ENCODE measurements at regions of chr22 and their contacts with region 1.

Region 1: DNA sequence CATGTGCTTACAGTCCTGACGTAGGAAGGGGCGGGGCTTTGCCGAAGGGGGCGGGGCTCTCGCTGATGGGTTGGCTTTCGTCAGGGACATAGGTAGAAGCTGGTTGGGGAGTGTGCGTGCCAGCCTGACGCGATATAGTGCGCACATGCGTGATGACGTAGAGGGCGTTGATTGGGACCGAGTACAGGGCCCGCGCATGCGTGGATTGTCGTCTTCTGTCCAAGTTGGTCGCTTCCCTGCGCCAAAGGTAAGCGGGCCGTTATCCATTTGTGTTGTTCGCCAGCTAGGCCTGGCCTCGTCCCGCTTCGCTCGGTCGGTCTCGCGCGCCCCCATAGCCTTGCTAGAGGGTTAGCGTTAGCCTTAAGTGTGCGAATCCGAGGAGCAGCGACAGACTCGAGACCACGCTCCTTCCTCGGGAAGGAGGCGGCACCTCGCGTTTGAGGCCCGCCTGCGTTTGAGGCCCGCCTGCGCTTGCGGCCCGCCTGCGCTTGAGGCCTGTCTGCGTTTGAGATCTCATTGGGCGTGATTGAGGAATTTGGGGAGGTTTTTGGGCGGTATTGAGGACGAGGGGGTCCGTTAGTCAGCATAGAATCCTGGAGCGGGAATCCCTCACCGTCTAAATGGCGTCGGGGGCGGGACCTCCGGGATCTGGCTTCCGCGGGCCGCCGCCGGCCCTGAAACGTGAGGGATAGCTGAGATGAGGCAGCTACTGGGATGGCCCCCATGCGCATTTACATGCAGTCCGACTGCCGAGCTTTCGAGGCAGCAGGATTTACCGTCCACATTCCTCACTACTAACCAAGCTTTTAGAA is at the start of gene XRCC6:
- DNase-seq: peak; percentile 99 to 100 (median 100)
- ATAC-seq: peak; percentile 88
- H3K4me3 ChIP-seq: peak within 1 kb of the TSS; percentile 65
- H3K4me3 Mint-ChIP-seq: peak within 1 kb of the TSS; percentile 95
- H3K27ac ChIP-seq: peak within 1 kb of the TSS; percentile 95 to 96
- H3K27ac Mint-ChIP-seq: peak within 1 kb of the TSS; percentile 98
- H3K4me1 ChIP-seq: peaks cover 43% of the 10 kb centered on the region
- H3K4me1 Mint-ChIP-seq: peaks cover 49% of the 10 kb centered on the region
- H3K27me3 ChIP-seq: no peaks in the 10 kb centered on the region
- H3K27me3 Mint-ChIP-seq: no peaks in the 10 kb centered on the region
- CTCF ChIP-seq: no peak
- total RNA-seq, gene XRCC6: 162 TPM

Region 2: DNA sequence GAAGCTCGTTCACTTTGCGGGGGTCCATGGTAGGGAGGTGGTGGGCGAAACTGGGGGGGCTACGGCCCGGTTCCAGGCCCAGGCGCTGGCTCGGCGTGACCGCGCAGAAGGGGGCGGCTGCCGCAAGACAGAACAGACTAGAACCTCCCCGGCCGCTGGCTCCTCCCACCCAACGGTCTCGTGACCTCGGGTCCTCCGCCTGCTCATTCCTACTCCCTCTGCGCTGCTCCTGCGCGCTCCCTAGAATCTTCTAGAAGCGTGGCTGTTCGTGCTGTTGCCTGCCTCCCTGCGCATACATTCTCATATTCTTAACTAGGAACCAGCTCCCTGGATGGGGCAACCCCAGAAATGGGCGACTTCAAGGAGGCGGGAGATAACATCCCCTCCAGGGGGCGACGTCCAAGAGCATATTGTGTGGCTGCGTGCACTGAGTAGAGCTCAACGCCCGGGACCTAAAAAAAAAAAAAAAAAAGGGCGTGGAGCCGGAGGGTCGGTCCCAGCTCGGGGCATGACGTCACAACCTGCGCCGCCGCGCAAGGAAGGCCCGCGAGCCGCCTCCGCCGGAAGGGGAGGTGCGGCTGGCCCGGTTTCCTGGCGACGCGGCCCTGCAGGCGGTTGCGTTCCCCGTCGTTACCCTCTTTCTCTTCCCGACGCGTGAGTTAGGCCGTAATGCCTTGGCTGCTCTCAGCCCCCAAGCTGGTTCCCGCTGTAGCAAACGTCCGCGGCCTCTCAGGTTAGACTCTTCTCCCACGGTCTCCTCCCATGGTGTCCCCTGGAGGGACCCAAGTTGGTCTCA is 764.6 kb before region 1 on chr22 and contains the starts of genes ST13 and XPNPEP3:
- CTCF ChIA-PET with region 1: no interaction called
- POLR2A ChIA-PET with region 1: no interaction called
- intact Hi-C with region 1: loop called in 1 of 2 experiments (anchors 10 kb)
- DNase-seq: peak; percentile 94 to 99 (median 96)
- ATAC-seq: peak; percentile 86
- H3K4me3 ChIP-seq: peak within 1 kb of the TSS; percentile 96
- H3K4me3 Mint-ChIP-seq: peak within 1 kb of the TSS; percentile 100
- H3K27ac ChIP-seq: peak within 1 kb of the TSS; percentile 95 to 99
- H3K27ac Mint-ChIP-seq: peak within 1 kb of the TSS; percentile 100
- H3K4me1 ChIP-seq: peaks cover 22% of the 10 kb centered on the region
- H3K4me1 Mint-ChIP-seq: peaks cover 80% of the 10 kb centered on the region
- H3K27me3 ChIP-seq: no peaks in the 10 kb centered on the region
- H3K27me3 Mint-ChIP-seq: no peaks in the 10 kb centered on the region
- CTCF ChIP-seq: peak; percentile 38
- total RNA-seq, gene ST13: 164 to 170 TPM
- total RNA-seq, gene XPNPEP3: 16.3 to 17.9 TPM

Region 3: DNA sequence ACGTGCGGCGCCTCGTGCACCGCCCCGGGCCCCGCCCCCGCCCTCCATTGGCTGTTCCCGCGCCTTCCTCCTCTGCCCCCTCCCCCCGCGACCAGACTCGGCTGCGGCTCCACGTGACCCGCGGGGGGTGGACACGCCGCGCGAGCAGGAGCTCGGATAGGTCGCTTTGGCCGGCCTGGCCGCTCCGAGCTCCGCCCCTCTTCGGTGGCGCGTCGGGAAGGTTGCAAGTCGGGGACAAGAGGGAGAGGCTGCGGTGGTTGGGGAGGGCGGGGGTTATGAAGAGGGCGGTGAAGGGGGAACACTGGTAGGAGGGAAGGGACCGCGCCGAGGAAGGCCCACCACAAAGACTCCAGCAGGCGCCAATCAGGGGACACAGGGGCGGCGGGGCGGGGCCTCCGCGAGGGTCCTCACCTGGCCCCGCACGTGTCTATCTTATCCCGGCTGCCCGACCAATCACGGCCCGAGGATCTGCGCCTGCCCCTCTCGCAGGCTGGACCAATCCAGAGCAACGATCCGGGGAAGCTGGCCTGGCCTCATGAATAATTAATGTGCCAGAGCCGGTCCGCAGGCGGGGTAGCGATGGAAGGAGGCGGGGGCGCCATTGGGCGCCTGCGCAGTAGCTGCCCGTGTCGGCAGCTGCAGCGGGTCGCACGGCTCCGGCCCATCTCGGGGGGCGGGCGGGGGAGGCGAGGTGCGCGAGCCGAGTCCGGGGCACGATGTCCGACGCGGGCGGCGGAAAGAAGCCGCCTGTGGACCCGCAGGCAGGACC is 239.8 kb before region 1 on chr22 and contains the start of gene TEF:
- CTCF ChIA-PET with region 1: no interaction called
- POLR2A ChIA-PET with region 1: interaction called, 14 read pairs
- intact Hi-C with region 1: no loop called
- DNase-seq: peak; percentile 96 to 99 (median 98)
- ATAC-seq: peak; percentile 79
- H3K4me3 ChIP-seq: peak within 1 kb of the TSS; percentile 66
- H3K4me3 Mint-ChIP-seq: peak within 1 kb of the TSS; percentile 98
- H3K27ac ChIP-seq: peak within 1 kb of the TSS; percentile 78 to 96
- H3K27ac Mint-ChIP-seq: peak within 1 kb of the TSS; percentile 99
- H3K4me1 ChIP-seq: peaks cover 20% of the 10 kb centered on the region
- H3K4me1 Mint-ChIP-seq: peaks cover 31% of the 10 kb centered on the region
- H3K27me3 ChIP-seq: no peaks in the 10 kb centered on the region
- H3K27me3 Mint-ChIP-seq: no peaks in the 10 kb centered on the region
- CTCF ChIP-seq: no peak
- total RNA-seq, gene TEF: 2.4 to 2.6 TPM

Region 4: GRCh38 chr22:41468381-41469217 is 152.7 kb before region 1 on chr22 and contains the starts of genes ACO2 and PHF5A:
- CTCF ChIA-PET with region 1: no interaction called
- POLR2A ChIA-PET with region 1: interaction called, 16 read pairs
- intact Hi-C with region 1: no loop called
- DNase-seq: peak; percentile 95 to 99 (median 98)
- ATAC-seq: peak; percentile 92
- H3K4me3 ChIP-seq: peak within 1 kb of the TSS; percentile 94
- H3K4me3 Mint-ChIP-seq: peak within 1 kb of the TSS; percentile 89
- H3K27ac ChIP-seq: peak within 1 kb of the TSS; percentile 94 to 98
- H3K27ac Mint-ChIP-seq: peak within 1 kb of the TSS; percentile 97
- H3K4me1 ChIP-seq: peaks cover 27% of the 10 kb centered on the region
- H3K4me1 Mint-ChIP-seq: peaks cover 62% of the 10 kb centered on the region
- H3K27me3 ChIP-seq: no peaks in the 10 kb centered on the region
- H3K27me3 Mint-ChIP-seq: no peaks in the 10 kb centered on the region
- CTCF ChIP-seq: no peak
- total RNA-seq, gene ACO2: 69.5 to 71.9 TPM
- total RNA-seq, gene PHF5A: 41.3 to 44.2 TPM

Region 5: GRCh38 chr22:41576877-41577276 is 44.4 kb before region 1 on chr22:
- CTCF ChIA-PET with region 1: no interaction called
- POLR2A ChIA-PET with region 1: no interaction called
- intact Hi-C with region 1: no loop called
- DNase-seq: peak in 12 of 14 experiments; percentile 7 to 59 (median 26)
- ATAC-seq: peak; percentile 62
- H3K4me3 ChIP-seq: no peak overlapping the region
- H3K4me3 Mint-ChIP-seq: no peak overlapping the region
- H3K27ac ChIP-seq: no peak overlapping the region
- H3K27ac Mint-ChIP-seq: no peak overlapping the region
- H3K4me1 ChIP-seq: no peaks in the 10 kb centered on the region
- H3K4me1 Mint-ChIP-seq: no peaks in the 10 kb centered on the region
- H3K27me3 ChIP-seq: no peaks in the 10 kb centered on the region
- H3K27me3 Mint-ChIP-seq: no peaks in the 10 kb centered on the region
- CTCF ChIP-seq: peak; percentile 16

Region 6: DNA sequence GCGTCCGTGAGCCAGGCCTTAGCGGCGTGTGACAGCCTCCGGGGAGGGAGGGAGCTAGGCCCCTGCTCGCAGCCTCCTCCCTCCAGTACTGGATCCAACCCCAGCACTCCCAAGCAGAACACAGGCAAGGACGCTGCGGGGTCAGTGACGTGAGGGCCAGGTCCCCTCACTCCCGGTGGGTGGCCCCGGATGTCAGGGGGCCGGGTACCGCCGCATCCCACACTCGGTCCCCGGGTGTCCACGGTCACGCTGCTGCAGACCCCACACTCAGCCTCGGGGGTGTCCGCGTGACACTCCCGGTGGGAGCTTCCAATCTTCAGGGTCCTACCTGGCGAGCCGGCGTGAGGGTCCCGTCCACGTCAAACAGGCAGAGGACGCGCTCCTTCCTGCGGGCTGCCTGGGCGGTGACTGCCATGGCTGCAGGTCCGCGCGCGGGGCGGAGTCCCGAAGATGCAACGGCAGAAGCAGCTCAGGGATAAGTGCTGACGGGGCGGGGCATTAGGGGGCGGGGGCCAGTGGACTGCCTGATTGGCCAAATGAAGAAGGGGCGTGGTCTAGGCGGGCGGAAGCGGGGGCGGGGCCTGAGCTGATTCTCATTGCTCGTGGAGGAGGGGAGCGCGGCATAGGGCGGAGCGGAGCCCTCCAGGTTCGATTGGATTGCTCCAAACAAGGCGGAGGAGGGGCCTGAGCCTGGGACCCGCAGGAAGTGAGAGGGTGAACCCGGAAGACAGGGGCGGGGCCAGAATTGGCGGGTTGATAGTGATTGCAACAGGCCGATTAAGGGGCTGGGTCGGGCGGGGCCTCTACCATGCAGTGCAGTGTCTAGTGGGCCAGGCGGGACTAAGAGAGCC is 31.7 kb before region 1 on chr22 and contains the start of gene PMM1:
- CTCF ChIA-PET with region 1: interaction called, 7 read pairs
- POLR2A ChIA-PET with region 1: interaction called, 58 read pairs
- intact Hi-C with region 1: loop called (anchors 1 kb)
- DNase-seq: peak; percentile 100
- ATAC-seq: peak; percentile 97
- H3K4me3 ChIP-seq: peak within 1 kb of the TSS; percentile 98
- H3K4me3 Mint-ChIP-seq: peak within 1 kb of the TSS; percentile 82
- H3K27ac ChIP-seq: peak within 1 kb of the TSS; percentile 29 to 64
- H3K27ac Mint-ChIP-seq: peak within 1 kb of the TSS; percentile 47
- H3K4me1 ChIP-seq: peaks cover 21% of the 10 kb centered on the region
- H3K4me1 Mint-ChIP-seq: peaks cover 17% of the 10 kb centered on the region
- H3K27me3 ChIP-seq: no peaks in the 10 kb centered on the region
- H3K27me3 Mint-ChIP-seq: no peaks in the 10 kb centered on the region
- CTCF ChIP-seq: no peak
- total RNA-seq, gene PMM1: 24.8 to 25.5 TPM

Region 7: GRCh38 chr22:41666661-41667258 is 45.5 kb after region 1 on chr22:
- CTCF ChIA-PET with region 1: interaction called, 11 read pairs
- POLR2A ChIA-PET with region 1: interaction called, 10 read pairs
- intact Hi-C with region 1: no loop called
- DNase-seq: peak; percentile 84 to 97 (median 93)
- ATAC-seq: peak; percentile 92
- H3K4me3 ChIP-seq: peak overlapping the region; percentile 58
- H3K4me3 Mint-ChIP-seq: peak overlapping the region; percentile 90
- H3K27ac ChIP-seq: peak overlapping the region; percentile 77 to 85
- H3K27ac Mint-ChIP-seq: peak overlapping the region; percentile 94
- H3K4me1 ChIP-seq: peaks cover 17% of the 10 kb centered on the region
- H3K4me1 Mint-ChIP-seq: peaks cover 13% of the 10 kb centered on the region
- H3K27me3 ChIP-seq: no peaks in the 10 kb centered on the region
- H3K27me3 Mint-ChIP-seq: no peaks in the 10 kb centered on the region
- CTCF ChIP-seq: peak; percentile 97

Region 8: GRCh38 chr22:41688365-41689211 is 67.3 kb after region 1 on chr22 and contains the start of gene SNU13:
- CTCF ChIA-PET with region 1: no interaction called
- POLR2A ChIA-PET with region 1: interaction called, 20 read pairs
- intact Hi-C with region 1: loop called in 1 of 2 experiments (anchors 5 kb)
- DNase-seq: peak; percentile 87 to 97 (median 90)
- ATAC-seq: peak; percentile 92
- H3K4me3 ChIP-seq: peak within 1 kb of the TSS; percentile 91
- H3K4me3 Mint-ChIP-seq: peak within 1 kb of the TSS; percentile 96
- H3K27ac ChIP-seq: peak within 1 kb of the TSS; percentile 95 to 98
- H3K27ac Mint-ChIP-seq: peak within 1 kb of the TSS; percentile 99
- H3K4me1 ChIP-seq: peaks cover 39% of the 10 kb centered on the region
- H3K4me1 Mint-ChIP-seq: peaks cover 45% of the 10 kb centered on the region
- H3K27me3 ChIP-seq: no peaks in the 10 kb centered on the region
- H3K27me3 Mint-ChIP-seq: no peaks in the 10 kb centered on the region
- CTCF ChIP-seq: no peak
- total RNA-seq, gene SNU13: 134 to 140 TPM